Activated T-helper 1 cell treated with anti-CD3 and anti-CD28 coated beads, Interleukin-12 subunit alpha, Interleukin-12 subunit beta, Interleukin-2, Interleukin-4 antibody, amounts not matched to agents 30 ng/mL and 10 ng/mL and 1 ng/mL, durations not matched to agents 14 hours and 24 hours and 36 hours (primary cell): ENCODE measurements at regions of chr19 and their contacts with region 1.

Region 1: GRCh38 chr19:8389891-8390616 is at the start of gene RAB11B:
- DNase-seq: peak; percentile 99
- H3K4me3 Mint-ChIP-seq: peak within 1 kb of the TSS; percentile 91
- H3K27ac Mint-ChIP-seq: peak within 1 kb of the TSS; percentile 94
- H3K4me1 Mint-ChIP-seq: no peaks in the 10 kb centered on the region
- H3K27me3 Mint-ChIP-seq: no peaks in the 10 kb centered on the region
- total RNA-seq, gene RAB11B: 75.1 and 81.0 TPM in 2 replicates

Region 2: DNA sequence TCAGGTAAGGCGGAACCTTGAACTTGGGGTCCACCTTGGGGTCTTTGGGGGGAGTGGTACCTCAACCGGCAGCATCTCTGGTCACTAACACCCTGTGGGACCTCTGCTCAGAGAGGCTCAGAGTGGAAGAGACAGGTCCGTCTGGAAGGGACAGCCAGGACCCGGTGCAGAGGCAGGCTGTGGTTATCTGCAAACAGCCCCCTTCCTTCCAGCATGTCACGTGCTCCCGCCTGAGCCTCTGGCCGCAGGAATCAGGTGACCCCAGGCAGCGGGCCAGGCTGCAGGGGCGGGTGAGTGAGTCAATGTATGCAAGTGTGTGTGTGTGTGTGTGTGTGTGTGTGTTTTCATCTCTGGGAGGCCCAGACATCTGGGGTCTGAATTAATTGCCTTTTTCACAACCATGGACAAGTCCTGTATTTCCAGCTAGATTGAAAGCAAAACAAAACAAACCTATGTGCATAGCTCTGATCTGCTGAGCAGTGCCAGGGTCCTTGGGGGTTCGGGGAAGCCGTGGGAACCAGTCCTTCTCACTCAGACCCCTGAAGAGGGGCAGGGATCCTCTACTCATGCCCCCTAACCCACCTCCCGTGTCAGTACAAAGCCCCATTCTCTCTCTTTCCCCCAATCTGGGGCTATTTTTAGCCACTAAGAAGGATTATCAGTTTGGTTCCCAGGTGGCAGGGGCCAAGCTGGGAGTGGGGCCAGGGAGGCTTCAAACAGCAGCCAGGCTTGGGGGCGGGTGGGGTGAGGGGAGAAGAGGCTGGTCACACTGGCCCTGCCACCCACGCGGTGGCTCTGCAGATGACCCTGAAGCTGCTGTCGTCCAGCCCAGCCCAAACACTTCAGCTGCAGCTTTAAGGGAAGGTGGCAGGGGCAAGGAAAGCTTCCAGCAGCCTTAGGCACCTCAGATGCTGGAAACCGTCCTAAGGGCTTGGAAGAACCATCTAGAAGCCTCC is 149.5 kb before region 1 on chr19:
- intact Hi-C with region 1: no loop called
- DNase-seq: no peak
- H3K4me3 Mint-ChIP-seq: no peak overlapping the region
- H3K27ac Mint-ChIP-seq: no peak overlapping the region
- H3K4me1 Mint-ChIP-seq: peaks cover 9% of the 10 kb centered on the region
- H3K27me3 Mint-ChIP-seq: no peaks in the 10 kb centered on the region

Region 3: DNA sequence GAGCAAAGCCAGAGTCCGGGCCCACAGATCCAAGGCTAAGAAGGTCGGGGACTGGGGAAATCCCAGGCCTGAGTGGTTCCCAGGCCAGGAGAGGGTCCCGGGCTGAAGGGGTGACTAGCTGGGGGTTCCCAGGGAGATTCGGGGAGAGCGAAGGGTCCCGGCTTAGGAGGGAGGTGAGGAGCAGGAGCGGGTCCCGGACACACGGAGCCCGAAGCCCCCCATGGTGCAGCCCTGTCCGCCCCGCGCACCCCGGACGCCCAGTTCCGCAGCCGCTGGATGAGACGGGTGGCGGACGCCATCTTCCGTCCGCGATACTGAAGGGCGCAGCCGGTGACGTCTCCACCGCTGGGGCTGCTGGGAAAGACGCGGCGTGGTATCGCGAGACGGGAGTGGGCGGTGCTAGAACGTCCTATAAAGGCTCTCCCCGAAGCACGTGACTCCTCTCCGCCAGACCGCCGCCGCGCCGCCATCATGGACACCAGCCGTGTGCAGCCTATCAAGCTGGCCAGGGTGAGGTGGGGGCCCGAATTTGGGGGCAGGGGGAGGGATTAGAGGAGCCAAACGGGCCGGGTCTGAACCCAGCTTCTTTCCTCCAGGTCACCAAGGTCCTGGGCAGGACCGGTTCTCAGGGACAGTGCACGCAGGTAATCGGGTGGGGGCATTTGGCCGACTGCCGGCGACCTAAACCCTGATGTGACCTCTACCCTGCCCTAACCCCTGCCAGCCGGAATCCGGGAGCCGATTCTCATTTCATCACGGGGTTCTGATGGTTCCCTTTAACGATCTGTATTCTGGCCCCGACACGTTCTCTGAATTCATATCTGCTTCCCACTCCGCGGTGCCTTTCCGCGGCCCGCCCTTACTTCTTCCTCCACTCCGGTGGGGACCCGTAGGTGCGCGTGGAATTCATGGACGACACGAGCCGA is 68.7 kb before region 1 on chr19 and contains the starts of genes NDUFA7 and RPS28:
- intact Hi-C with region 1: loop called (anchors 1 kb)
- DNase-seq: peak; percentile 96
- H3K4me3 Mint-ChIP-seq: peak within 1 kb of the TSS; percentile 100
- H3K27ac Mint-ChIP-seq: peak within 1 kb of the TSS; percentile 99
- H3K4me1 Mint-ChIP-seq: peaks cover 31% of the 10 kb centered on the region
- H3K27me3 Mint-ChIP-seq: no peaks in the 10 kb centered on the region
- total RNA-seq, gene NDUFA7: 51.1 and 51.8 TPM in 2 replicates
- total RNA-seq, gene RPS28: 1,836 and 1,872 TPM in 2 replicates

Region 4: DNA sequence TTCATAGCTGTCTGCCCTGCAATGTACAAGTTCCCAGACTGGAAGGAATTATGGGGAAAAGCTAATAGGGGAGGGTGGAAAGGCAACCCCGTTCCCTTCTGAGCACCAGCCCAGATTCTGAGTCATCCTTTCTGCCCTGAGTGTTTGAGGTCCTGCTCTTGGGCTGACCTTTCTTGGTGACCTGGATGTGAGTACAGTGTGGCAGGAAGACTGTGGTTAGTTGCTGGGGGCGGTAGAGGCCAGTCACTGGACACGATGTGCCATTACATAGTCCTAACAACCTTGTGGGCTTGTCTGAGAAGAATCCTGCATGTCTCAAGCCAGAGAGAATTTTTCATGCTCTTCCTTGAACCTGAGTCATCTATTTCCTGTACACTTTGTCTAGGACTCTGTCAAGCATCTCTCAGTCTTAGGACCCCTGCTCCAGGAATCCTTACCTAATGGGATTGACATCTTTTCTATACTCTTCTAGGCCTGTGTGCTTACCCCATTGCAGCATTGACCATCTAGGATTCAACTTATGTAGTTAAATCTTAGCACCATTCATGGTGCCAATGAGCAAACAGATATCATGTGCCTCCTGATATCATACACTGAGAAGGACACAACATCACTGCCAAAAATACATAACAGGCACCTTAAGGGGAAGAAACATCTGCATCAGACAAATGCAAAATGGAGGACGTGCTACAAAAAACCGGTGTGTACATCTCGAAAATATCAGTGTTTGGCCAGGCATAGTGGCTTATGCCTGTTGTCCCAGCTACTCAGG is 34.2 kb before region 1 on chr19:
- intact Hi-C with region 1: loop called (anchors 1 kb)
- DNase-seq: no peak
- H3K4me3 Mint-ChIP-seq: no peak overlapping the region
- H3K27ac Mint-ChIP-seq: no peak overlapping the region
- H3K4me1 Mint-ChIP-seq: peaks cover 9% of the 10 kb centered on the region
- H3K27me3 Mint-ChIP-seq: peaks cover 18% of the 10 kb centered on the region

Region 5: GRCh38 chr19:8412783-8413628 is 23.0 kb after region 1 on chr19 and contains the start of gene MARCHF2:
- intact Hi-C with region 1: loop called (anchors 1 kb)
- DNase-seq: peak; percentile 95
- H3K4me3 Mint-ChIP-seq: peak within 1 kb of the TSS; percentile 56
- H3K27ac Mint-ChIP-seq: peak within 1 kb of the TSS; percentile 16
- H3K4me1 Mint-ChIP-seq: peaks cover 11% of the 10 kb centered on the region
- H3K27me3 Mint-ChIP-seq: no peaks in the 10 kb centered on the region
- total RNA-seq, gene MARCHF2: 8.1 and 9.6 TPM in 2 replicates

Region 6: GRCh38 chr19:8430650-8431049 is 40.6 kb after region 1 on chr19:
- intact Hi-C with region 1: no loop called
- DNase-seq: no peak
- H3K4me3 Mint-ChIP-seq: no peak overlapping the region
- H3K27ac Mint-ChIP-seq: no peak overlapping the region
- H3K4me1 Mint-ChIP-seq: no peaks in the 10 kb centered on the region
- H3K27me3 Mint-ChIP-seq: no peaks in the 10 kb centered on the region

Region 7: DNA sequence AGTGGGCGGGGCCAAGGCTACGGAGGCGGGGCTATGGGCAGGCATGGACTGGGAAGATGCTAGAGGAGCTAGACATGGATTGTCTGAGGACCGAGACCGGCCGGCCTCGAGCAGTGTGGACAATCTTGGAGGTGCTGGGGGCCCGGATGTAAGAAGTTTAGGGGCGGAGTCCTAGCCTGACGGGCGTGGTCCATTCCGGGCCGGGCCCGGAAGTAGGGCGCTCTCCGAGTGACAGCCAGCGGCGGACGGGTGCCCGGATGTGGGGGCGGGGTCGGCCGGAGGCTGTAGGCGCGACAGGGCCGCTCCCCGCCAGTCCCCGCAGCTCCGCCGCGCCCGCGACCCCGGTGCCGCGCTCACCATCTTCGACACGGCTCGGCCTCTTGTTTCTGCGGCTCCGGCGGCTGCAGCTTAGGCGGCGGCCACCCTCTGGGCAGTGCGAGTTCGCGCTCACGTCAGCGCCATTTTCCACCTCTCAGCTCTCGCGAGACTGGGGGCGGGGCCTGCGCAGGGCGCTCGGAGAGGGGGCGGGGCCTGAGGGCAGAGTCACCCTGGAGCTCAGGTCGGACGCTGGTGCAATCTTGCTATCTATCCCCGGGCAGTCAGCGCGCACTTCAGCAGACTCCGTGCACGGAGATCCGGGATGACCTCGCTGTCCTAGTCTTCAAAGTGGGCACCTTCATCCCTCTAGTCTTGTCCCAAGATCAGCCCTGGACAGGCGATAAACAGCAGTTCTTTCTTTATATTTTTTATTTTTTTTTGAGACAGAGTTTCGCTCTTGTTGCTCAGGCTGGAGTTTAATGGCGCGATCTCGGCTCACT is 123.8 kb after region 1 on chr19 and contains the start of gene ZNF414:
- intact Hi-C with region 1: loop called (anchors 1 kb)
- DNase-seq: peak; percentile 92
- H3K4me3 Mint-ChIP-seq: peak within 1 kb of the TSS; percentile 93
- H3K27ac Mint-ChIP-seq: peak within 1 kb of the TSS; percentile 98
- H3K4me1 Mint-ChIP-seq: peaks cover 52% of the 10 kb centered on the region
- H3K27me3 Mint-ChIP-seq: no peaks in the 10 kb centered on the region
- total RNA-seq, gene ZNF414: 22.1 and 23.6 TPM in 2 replicates